Transverse colon (tissue), 4 donors: ENCODE measurements at regions of chr20 and their contacts with region 1.

Region 1: DNA sequence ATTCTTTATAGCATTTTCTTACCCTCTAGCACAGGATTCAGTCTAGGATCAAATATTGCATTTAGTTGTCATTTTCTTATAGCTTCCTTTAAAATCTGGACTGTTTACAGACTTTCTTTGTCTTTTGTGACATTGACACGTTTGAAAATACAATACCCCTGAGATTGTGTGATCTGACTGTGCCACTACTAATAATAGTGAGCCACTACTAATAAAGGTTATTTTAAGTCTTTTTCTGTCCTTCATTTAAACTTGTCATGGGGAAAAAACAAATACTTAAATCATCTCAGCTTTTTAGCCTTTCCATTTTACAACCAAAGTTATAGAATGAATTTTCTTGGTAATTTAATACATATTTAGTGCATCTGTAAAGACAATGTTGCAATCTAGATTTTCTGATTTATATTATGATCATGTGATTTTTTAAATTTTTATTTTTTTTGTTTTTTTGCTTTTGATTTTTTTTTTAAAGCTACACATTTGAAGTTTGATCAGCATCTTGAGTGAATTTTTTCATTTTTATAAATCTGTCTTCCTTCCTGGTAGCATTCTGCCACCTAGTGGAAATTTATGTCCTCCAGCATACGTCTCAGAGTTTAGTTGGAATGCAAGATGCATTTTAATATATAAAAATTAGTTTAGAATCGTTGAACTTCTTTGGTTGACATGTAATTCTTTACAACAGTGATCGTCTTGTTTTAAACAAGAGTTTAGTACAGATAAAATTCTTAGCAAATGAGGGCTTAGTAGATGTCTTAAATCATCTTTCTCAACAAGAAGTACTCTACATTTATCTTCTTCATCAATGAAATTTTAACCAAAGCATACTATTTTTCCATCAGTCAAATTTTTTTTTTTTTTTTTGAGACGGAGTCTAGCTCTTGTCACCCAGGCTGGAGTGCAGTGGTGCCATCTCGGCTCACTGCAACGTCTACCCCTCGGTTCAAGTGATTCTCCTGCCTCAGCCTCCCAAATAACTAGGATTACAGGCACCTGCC is 119.4 kb downstream of the NCOA3 start:
- DNase-seq: no peak
- H3K4me3 ChIP-seq: no peak overlapping the region
- H3K27ac ChIP-seq: no peak overlapping the region
- H3K4me1 ChIP-seq: peaks cover 0 to 4% (median 1%) of the 10 kb centered on the region in 4 donors
- H3K27me3 ChIP-seq: no peaks in the 10 kb centered on the region
- CTCF ChIP-seq: peak; percentile 77 to 91 (median 81)
- EP300 ChIP-seq: no peak
- POLR2A ChIP-seq: no peak

Region 2: GRCh38 chr20:47196091-47197081 is 424.7 kb before region 1 on chr20:
- in situ Hi-C with region 1: loop called in 2 of 4 experiments (anchors 10 to 25 kb)
- intact Hi-C with region 1: loop called (anchors 10 kb)
- DNase-seq: peak; percentile 81
- H3K4me3 ChIP-seq: no peak overlapping the region
- H3K27ac ChIP-seq: no peak overlapping the region
- H3K4me1 ChIP-seq: peaks cover 0 to 6% (median 2%) of the 10 kb centered on the region in 4 donors
- H3K27me3 ChIP-seq: no peaks in the 10 kb centered on the region
- CTCF ChIP-seq: peak; percentile 91 to 99 (median 97)
- EP300 ChIP-seq: no peak
- POLR2A ChIP-seq: no peak

Region 3: GRCh38 chr20:47272893-47273590 is 348.1 kb before region 1 on chr20:
- in situ Hi-C with region 1: loop called (anchors 10 to 25 kb)
- intact Hi-C with region 1: loop called (anchors 10 kb)
- DNase-seq: peak; percentile 31
- H3K4me3 ChIP-seq: no peak overlapping the region
- H3K27ac ChIP-seq: peak overlapping the region; percentile 77 to 82 (median 80)
- H3K4me1 ChIP-seq: peaks cover 15 to 36% (median 16%) of the 10 kb centered on the region in 4 donors
- H3K27me3 ChIP-seq: no peaks in the 10 kb centered on the region
- CTCF ChIP-seq: peak; percentile 82 to 97 (median 84)
- EP300 ChIP-seq: no peak
- POLR2A ChIP-seq: no peak

Region 4: GRCh38 chr20:47501483-47502270 is 119.4 kb before region 1 on chr20 and contains the start of gene NCOA3:
- in situ Hi-C with region 1: no loop called
- intact Hi-C with region 1: loop called (anchors 10 kb)
- DNase-seq: peak; percentile 96
- H3K4me3 ChIP-seq: peak within 1 kb of the TSS; percentile 57 to 96 (median 89)
- H3K27ac ChIP-seq: peak within 1 kb of the TSS; percentile 89 to 96 (median 95)
- H3K4me1 ChIP-seq: peaks cover 13 to 27% (median 15%) of the 10 kb centered on the region in 4 donors
- H3K27me3 ChIP-seq: no peaks in the 10 kb centered on the region
- CTCF ChIP-seq: peak; percentile 62 to 91 (median 68)
- EP300 ChIP-seq: no peak
- POLR2A ChIP-seq: peak; percentile 98
- total RNA-seq, gene NCOA3: 9.2 to 39.1 (median 22.3) TPM

Region 5: DNA sequence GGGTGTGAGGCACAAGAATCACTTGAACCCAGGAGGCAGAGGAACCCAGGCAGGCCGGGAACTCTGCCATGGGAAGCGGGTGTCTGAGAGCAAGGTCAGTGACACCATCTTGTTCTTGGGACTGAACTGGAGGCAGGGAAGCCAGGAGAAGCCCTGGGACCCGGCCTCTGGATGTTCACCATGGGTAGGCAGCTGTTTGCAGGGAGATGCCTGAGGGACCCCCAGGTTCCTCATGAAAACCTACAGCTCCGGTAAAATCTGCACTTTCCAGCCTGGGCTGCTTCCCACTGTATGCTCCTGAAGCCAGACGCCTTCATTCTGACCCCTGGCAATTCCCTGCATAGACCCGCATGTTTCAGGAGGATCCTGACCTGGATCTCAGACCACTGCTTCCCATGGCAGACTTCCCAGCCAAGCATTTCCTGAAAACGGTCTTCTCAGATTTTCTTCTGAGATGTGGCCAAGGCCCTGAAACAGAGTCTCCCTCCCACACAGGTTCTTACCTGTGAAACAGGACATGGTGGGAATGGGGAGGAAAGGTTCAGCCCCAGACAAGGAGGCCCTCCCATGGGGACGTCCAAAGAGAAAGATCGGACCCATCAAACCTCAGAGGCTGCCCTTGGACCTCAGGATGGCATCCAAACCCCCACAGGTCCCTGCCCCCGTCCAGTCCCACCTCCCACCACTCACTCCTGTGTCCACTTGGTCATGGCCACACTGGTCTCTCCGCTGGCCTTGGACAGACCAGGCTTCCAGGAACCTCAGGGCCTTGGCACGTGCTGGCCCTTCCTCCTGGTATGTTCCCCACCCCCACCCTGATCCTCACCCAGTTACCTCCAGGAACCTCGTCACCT is 900.1 kb after region 1 on chr20:
- in situ Hi-C with region 1: no loop called
- intact Hi-C with region 1: no loop called
- DNase-seq: no peak
- H3K4me3 ChIP-seq: no peak overlapping the region
- H3K27ac ChIP-seq: no peak overlapping the region
- H3K4me1 ChIP-seq: no peaks in the 10 kb centered on the region
- H3K27me3 ChIP-seq: no peaks in the 10 kb centered on the region
- CTCF ChIP-seq: no peak
- EP300 ChIP-seq: no peak
- POLR2A ChIP-seq: no peak